ENCODE measurements at regions of chr1 and their contacts with region 1.

Region 1: DNA sequence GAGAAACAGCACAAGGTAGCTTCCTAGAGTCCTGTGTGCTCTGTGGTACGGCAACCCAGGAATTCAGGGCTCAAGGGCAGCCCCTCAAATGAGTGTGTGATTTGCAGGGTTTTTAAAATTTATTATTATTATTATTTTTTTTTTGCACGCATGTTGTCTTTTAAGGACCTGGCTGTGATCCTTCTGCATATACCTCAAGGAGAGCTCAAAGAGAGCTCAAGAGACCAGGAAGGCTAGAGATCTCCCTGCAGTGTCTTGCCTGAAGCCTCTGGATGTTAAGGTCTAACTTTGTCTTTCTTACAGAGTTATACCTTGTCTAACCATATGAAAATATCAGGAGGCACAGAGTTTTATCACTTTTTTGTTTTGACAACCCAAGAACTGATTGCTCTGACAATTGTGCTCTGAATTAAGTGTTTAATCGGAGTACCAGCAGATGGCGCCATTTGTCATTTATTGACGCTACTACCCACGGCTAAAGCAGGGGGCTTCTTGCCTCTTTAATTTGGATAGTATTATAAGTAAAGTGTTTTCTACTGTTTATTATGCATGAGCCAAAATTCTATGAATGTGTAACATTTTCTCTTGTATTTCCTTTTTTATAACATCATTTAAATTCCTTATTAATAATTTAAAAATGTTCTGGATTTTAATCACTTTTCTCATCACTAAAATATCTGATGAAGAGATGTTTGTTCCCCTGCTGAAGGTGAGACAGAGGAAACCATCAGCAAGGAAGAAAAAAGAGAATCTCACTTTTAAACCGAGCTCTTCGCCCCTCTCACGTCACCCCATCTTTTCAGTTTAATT is 35.8 kb upstream of the LMO4 start:
- DNase-seq: peak; percentile 77
- H3K4me3 Mint-ChIP-seq: no peak overlapping the region
- H3K27ac Mint-ChIP-seq: no peak overlapping the region
- H3K4me1 Mint-ChIP-seq: no peaks in the 10 kb centered on the region
- H3K27me3 Mint-ChIP-seq: peaks cover 9% of the 10 kb centered on the region

Region 2: DNA sequence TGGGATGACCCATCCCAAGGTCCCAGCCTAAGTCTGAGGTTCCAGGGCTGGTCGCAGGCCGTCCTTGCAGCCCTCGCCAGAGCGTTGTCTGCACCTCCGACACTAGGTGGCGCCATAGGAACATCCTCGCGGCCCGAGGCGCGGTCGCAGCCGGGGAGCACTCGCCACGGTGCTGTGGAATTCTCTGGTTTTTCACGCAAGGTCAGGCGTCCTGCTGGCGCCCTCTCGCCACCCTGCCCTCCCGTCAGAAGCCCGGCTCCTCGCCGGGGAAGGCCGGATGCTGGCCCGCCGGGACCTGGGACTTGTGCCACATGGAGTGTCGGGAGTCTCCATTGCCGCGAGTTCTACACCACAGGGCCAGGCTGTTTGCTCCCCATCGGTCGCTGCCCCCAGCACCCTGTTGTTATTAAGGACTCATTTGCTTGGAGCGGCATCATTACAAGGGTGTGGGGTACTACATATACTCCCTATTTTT is 161.0 kb before region 1 on chr1:
- CTCF ChIA-PET with region 1: no interaction called
- intact Hi-C with region 1: loop called (anchors 5 kb)
- DNase-seq: peak; percentile 81
- H3K4me3 Mint-ChIP-seq: peak overlapping the region; percentile 69
- H3K27ac Mint-ChIP-seq: no peak overlapping the region
- H3K4me1 Mint-ChIP-seq: peaks cover 7% of the 10 kb centered on the region
- H3K27me3 Mint-ChIP-seq: peaks cover 40% of the 10 kb centered on the region

Region 3: DNA sequence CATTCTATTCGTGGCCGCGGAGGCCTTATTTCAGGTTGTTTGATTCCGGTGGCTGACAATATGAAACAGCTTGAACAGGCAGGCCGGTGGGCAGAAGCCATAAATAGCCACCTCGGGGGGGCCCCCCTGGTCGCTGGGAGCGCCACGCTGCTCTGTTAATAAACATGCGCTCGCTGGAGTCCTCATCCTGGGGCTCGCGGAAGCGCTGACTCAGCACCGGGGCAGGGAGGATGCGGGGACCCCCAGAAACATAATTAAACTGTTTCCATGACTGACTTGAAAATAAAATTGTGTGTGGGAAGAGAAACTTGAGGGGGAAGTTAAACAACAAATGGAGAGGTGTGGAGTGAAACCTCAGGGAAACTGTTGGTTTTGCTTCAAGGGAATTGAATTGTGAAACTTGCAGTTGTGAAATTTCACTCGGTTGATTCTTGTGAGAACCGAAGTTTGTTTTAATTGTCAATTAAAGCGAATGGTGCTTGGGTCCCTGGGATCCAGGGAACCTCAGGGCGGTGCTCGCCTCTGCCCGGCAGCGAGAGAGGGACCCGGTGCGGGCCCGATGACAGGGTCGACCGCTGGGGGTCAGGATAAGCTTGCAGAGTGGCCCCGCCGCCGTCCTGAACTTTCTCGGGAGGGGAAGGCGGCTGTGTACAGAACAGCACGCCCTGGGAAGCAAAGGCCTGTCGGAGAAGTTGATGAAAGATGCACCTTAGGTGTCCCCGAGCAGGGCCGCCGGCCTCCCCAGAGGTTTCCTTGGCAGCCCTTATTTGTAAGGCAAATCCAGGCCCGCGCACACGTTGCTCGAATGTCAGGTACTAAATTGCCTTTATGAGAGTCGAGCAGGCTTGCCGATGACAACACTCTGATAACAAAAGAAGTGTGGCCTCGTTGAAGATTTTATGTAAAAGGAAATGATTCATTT is 141.1 kb before region 1 on chr1:
- CTCF ChIA-PET with region 1: no interaction called
- intact Hi-C with region 1: loop called (anchors 1 kb)
- DNase-seq: peak; percentile 62
- H3K4me3 Mint-ChIP-seq: peak overlapping the region; percentile 70
- H3K27ac Mint-ChIP-seq: no peak overlapping the region
- H3K4me1 Mint-ChIP-seq: peaks cover 12% of the 10 kb centered on the region
- H3K27me3 Mint-ChIP-seq: peaks cover 34% of the 10 kb centered on the region

Region 4: GRCh38 chr1:87348341-87348999 is 55.6 kb after region 1 on chr1:
- CTCF ChIA-PET with region 1: no interaction called
- intact Hi-C with region 1: no loop called
- DNase-seq: no peak
- H3K4me3 Mint-ChIP-seq: no peak overlapping the region
- H3K27ac Mint-ChIP-seq: no peak overlapping the region
- H3K4me1 Mint-ChIP-seq: no peaks in the 10 kb centered on the region
- H3K27me3 Mint-ChIP-seq: no peaks in the 10 kb centered on the region

Region 5: GRCh38 chr1:87953732-87954344 is 660.9 kb after region 1 on chr1:
- CTCF ChIA-PET with region 1: interaction called, 8 read pairs
- intact Hi-C with region 1: loop called (anchors 1 kb)
- DNase-seq: peak; percentile 62
- H3K4me3 Mint-ChIP-seq: no peak overlapping the region
- H3K27ac Mint-ChIP-seq: no peak overlapping the region
- H3K4me1 Mint-ChIP-seq: no peaks in the 10 kb centered on the region
- H3K27me3 Mint-ChIP-seq: peaks cover 20% of the 10 kb centered on the region

Region 6: GRCh38 chr1:88061492-88062177 is 768.7 kb after region 1 on chr1:
- CTCF ChIA-PET with region 1: no interaction called
- intact Hi-C with region 1: loop called (anchors 1 kb)
- DNase-seq: peak; percentile 44
- H3K4me3 Mint-ChIP-seq: no peak overlapping the region
- H3K27ac Mint-ChIP-seq: no peak overlapping the region
- H3K4me1 Mint-ChIP-seq: no peaks in the 10 kb centered on the region
- H3K27me3 Mint-ChIP-seq: peaks cover 5% of the 10 kb centered on the region

Region 7: GRCh38 chr1:88180449-88181108 is 887.7 kb after region 1 on chr1:
- CTCF ChIA-PET with region 1: no interaction called
- intact Hi-C with region 1: loop called (anchors 10 kb)
- DNase-seq: peak; percentile 79
- H3K4me3 Mint-ChIP-seq: no peak overlapping the region
- H3K27ac Mint-ChIP-seq: no peak overlapping the region
- H3K4me1 Mint-ChIP-seq: peaks cover 2% of the 10 kb centered on the region
- H3K27me3 Mint-ChIP-seq: peaks cover 2% of the 10 kb centered on the region

Region 8: GRCh38 chr1:88595355-88596002 is 1302.6 kb after region 1 on chr1:
- CTCF ChIA-PET with region 1: no interaction called
- intact Hi-C with region 1: loop called (anchors 2 kb)
- DNase-seq: no peak
- H3K4me3 Mint-ChIP-seq: no peak overlapping the region
- H3K27ac Mint-ChIP-seq: no peak overlapping the region
- H3K4me1 Mint-ChIP-seq: peaks cover 4% of the 10 kb centered on the region
- H3K27me3 Mint-ChIP-seq: peaks cover 3% of the 10 kb centered on the region